ENCODE measurements at regions of chr1 and their contacts with region 1.

Region 1: DNA sequence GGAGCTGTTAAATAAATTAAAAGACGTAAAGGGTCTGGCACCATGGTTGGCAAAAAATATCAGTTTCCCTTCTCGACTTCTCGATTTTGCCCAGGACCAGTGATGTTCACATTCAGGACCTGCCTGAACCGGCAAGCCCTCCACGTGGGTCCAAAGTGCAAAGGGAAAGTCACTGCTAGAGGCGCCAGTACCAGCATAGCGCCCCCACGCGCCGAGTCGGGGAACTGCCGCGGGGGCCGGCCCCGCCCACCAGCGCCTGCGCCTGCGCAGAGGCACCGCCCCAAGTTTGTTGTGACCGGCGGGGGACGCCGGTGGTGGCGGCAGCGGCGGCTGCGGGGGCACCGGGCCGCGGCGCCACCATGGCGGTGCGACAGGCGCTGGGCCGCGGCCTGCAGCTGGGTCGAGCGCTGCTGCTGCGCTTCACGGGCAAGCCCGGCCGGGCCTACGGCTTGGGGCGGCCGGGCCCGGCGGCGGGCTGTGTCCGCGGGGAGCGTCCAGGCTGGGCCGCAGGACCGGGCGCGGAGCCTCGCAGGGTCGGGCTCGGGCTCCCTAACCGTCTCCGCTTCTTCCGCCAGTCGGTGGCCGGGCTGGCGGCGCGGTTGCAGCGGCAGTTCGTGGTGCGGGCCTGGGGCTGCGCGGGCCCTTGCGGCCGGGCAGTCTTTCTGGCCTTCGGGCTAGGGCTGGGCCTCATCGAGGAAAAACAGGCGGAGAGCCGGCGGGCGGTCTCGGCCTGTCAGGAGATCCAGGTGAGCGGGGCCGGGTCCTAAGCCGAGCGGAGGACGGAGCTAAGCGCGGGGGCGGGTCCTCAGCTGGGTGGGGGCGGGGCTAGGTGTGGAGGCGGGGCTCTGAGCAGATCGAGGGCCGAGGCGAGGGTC is at the start of gene PINK1:
- DNase-seq: peak; percentile 63 to 94 (median 82)
- ATAC-seq: peak; percentile 91 to 94 (median 93)
- H3K4me3 ChIP-seq: peak within 1 kb of the TSS; percentile 66 to 72
- H3K4me3 Mint-ChIP-seq: peak within 1 kb of the TSS; percentile 87 to 88 (median 87)
- H3K27ac ChIP-seq: peak within 1 kb of the TSS; percentile 62
- H3K27ac Mint-ChIP-seq: peak within 1 kb of the TSS; percentile 85 to 95
- H3K4me1 ChIP-seq: peaks cover 3 to 18% of the 10 kb centered on the region in 2 experiments
- H3K4me1 Mint-ChIP-seq: peaks cover 8 to 15% (median 9%) of the 10 kb centered on the region in 3 donors
- H3K27me3 ChIP-seq: no peaks in the 10 kb centered on the region
- H3K27me3 Mint-ChIP-seq: peaks cover 0 to 3% of the 10 kb centered on the region in 2 donors
- total RNA-seq, gene PINK1: 11.8 to 30.1 (median 26.8) TPM

Region 2: DNA sequence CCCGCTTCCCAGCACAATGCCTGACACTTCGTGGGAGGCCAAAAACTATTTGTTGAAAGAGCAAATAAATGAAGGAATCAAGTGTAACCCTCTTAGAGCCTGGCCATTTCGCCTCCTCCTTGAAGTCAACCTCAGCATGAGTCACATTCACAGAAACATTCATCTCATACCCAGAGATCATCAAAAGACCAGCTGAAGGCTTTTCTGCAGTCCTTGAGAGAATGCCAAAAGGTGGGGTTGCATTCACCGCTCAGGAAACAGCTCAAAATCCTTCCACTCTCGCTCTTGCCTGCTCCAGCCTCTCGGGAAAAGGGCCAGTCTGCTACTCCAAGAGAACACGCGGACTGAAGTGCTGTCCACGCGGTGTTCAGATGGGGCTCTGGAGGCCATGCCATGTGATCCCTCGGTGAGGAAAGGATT is 252.8 kb before region 1 on chr1:
- CTCF ChIA-PET with region 1: no interaction called
- POLR2A ChIA-PET with region 1: no interaction called
- DNase-seq: no peak
- ATAC-seq: no peak
- H3K4me3 ChIP-seq: no peak overlapping the region
- H3K4me3 Mint-ChIP-seq: no peak overlapping the region
- H3K27ac ChIP-seq: no peak overlapping the region
- H3K27ac Mint-ChIP-seq: no peak overlapping the region
- H3K4me1 ChIP-seq: peaks cover 0 to 2% of the 10 kb centered on the region in 2 experiments
- H3K4me1 Mint-ChIP-seq: peaks cover 0 to 1% (median 0%) of the 10 kb centered on the region in 3 donors
- H3K27me3 ChIP-seq: peaks cover 2 to 57% of the 10 kb centered on the region in 2 experiments
- H3K27me3 Mint-ChIP-seq: peaks cover 45 to 50% of the 10 kb centered on the region in 2 donors

Region 3: DNA sequence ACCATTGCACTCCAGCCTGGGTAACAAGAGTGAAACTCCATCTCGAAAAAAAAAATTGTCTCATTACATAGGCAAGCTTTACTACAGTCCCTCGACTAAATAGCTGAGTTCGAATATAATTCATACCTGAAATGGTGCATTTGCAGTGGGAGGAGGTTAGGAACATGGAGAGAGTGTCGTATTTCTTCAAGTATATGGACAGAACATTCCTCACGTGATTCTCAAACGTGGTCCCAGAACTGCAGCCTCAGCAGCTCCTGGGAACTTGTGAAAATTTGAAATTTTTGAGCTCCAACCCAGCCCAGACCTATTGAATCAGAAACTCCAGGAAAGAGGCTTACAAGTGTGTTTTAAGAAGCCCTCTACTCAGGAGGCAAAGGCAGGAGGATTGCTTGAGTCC is 37.3 kb before region 1 on chr1:
- CTCF ChIA-PET with region 1: no interaction called
- POLR2A ChIA-PET with region 1: interaction called in 1 of 2 experiments, 11 read pairs
- DNase-seq: no peak
- ATAC-seq: no peak
- H3K4me3 ChIP-seq: no peak overlapping the region
- H3K4me3 Mint-ChIP-seq: no peak overlapping the region
- H3K27ac ChIP-seq: no peak overlapping the region
- H3K27ac Mint-ChIP-seq: no peak overlapping the region
- H3K4me1 ChIP-seq: no peaks in the 10 kb centered on the region
- H3K4me1 Mint-ChIP-seq: no peaks in the 10 kb centered on the region
- H3K27me3 ChIP-seq: peaks cover 0 to 43% of the 10 kb centered on the region in 2 experiments
- H3K27me3 Mint-ChIP-seq: peaks cover 15 to 29% of the 10 kb centered on the region in 2 donors

Region 4: GRCh38 chr1:20661207-20662109 is 28.0 kb after region 1 on chr1 and contains the start of gene DDOST:
- CTCF ChIA-PET with region 1: interaction called, 4 to 17 read pairs
- POLR2A ChIA-PET with region 1: interaction called in 1 of 2 experiments, 10 read pairs
- DNase-seq: peak; percentile 81 to 97 (median 94)
- ATAC-seq: peak; percentile 95 to 97 (median 96)
- H3K4me3 ChIP-seq: peak within 1 kb of the TSS; percentile 84 to 87
- H3K4me3 Mint-ChIP-seq: peak within 1 kb of the TSS; percentile 81 to 100 (median 100)
- H3K27ac ChIP-seq: peak within 1 kb of the TSS; percentile 62
- H3K27ac Mint-ChIP-seq: peak within 1 kb of the TSS; percentile 98 to 100
- H3K4me1 ChIP-seq: peaks cover 10 to 31% of the 10 kb centered on the region in 2 experiments
- H3K4me1 Mint-ChIP-seq: peaks cover 55 to 63% (median 57%) of the 10 kb centered on the region in 3 donors
- H3K27me3 ChIP-seq: no peaks in the 10 kb centered on the region
- H3K27me3 Mint-ChIP-seq: no peaks in the 10 kb centered on the region
- total RNA-seq, gene DDOST: 106 to 145 (median 124) TPM